WTC11 (cell line): ENCODE measurements at regions of chr19 and their contacts with region 1.

Region 1: DNA sequence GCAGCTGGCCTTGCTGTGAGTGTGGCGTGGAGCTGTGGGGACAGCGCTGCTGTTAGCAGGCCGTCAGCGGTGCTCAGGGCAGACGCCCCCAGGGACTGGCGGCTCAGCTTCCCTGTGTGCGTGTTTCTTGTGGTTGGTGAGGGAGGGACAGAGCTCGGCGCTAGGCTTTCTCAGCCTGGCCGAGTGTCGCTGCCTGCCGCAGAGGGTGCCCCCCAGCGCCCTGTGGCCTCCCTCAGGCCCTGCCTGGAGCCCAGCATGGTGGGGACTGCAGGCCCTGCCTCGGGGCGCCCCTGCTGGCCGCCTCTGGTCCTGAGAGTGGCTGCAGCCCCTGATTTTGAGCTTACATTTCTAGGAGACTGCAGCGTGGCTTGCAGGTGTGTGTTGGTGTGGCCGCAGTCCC is 35.5 kb downstream of the DOT1L start:
- DNase-seq: peak; percentile 62
- ATAC-seq: peak; percentile 89
- H3K4me3 Mint-ChIP-seq: no peak overlapping the region
- H3K27ac Mint-ChIP-seq: peak overlapping the region; percentile 83
- H3K4me1 Mint-ChIP-seq: no peaks in the 10 kb centered on the region
- H3K27me3 Mint-ChIP-seq: no peaks in the 10 kb centered on the region
- CTCF ChIP-seq: peak; percentile 47; the same call in 1 of the 2 replicates

Region 2: DNA sequence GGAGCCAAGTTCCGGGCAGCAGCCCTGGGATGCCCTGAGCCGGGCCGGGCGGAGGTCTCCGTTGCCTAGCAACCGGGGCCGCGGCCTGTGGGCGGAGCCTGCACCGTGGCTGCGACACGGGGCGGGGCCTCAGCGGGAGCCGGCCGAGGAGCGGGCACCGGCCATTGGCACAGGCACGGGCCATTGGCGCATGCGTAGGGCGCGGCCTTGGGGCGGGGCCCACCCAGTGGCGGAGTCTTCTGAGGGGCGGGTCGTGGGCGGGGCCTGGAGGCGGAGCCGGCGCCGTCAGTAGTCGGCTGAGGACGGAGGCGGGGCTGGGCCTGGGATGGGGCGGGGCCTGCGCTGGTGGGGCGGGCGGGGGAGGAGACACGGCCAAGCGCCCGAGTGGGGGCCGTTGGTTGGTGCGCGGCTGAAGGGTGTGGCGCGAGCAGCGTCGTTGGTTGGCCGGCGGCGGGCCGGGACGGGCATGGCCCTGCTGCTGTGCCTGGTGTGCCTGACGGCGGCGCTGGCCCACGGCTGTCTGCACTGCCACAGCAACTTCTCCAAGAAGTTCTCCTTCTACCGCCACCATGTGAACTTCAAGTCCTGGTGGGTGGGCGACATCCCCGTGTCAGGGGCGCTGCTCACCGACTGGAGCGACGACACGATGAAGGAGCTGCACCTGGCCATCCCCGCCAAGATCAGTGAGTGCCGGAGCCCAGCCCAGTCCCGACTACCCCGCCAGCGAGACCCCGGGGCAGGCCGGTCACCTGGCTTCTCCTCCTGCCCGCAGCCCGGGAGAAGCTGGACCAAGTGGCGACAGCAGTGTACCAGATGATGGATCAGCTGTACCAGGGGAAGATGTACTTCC is 102.5 kb before region 1 on chr19 and contains the start of gene IZUMO4:
- CTCF ChIA-PET with region 1: no interaction called
- POLR2A ChIA-PET with region 1: no interaction called
- DNase-seq: peak; percentile 100
- ATAC-seq: peak; percentile 87
- H3K4me3 Mint-ChIP-seq: peak within 1 kb of the TSS; percentile 80
- H3K27ac Mint-ChIP-seq: no peak within 1 kb of the TSS
- H3K4me1 Mint-ChIP-seq: peaks cover 5% of the 10 kb centered on the region; the same call in 1 of the 2 replicates
- H3K27me3 Mint-ChIP-seq: no peaks in the 10 kb centered on the region
- CTCF ChIP-seq: no peak
- total RNA-seq, gene IZUMO4: 0.73 to 1.9 TPM (median 1.8 TPM) in 3 replicates

Region 3: GRCh38 chr19:2158535-2158934 is 40.7 kb before region 1 on chr19:
- CTCF ChIA-PET with region 1: interaction called, 25 read pairs
- POLR2A ChIA-PET with region 1: interaction called, 4 read pairs
- DNase-seq: no peak
- ATAC-seq: no peak
- H3K4me3 Mint-ChIP-seq: no peak overlapping the region
- H3K27ac Mint-ChIP-seq: 0 out of 2 replicates have a peak overlapping the region, but pooled peaks have one; percentile 15
- H3K4me1 Mint-ChIP-seq: no peaks in the 10 kb centered on the region
- H3K27me3 Mint-ChIP-seq: no peaks in the 10 kb centered on the region
- CTCF ChIP-seq: no peak

Region 4: GRCh38 chr19:2176337-2176994 is 22.7 kb before region 1 on chr19:
- CTCF ChIA-PET with region 1: interaction called, 19 read pairs
- POLR2A ChIA-PET with region 1: interaction called, 3 read pairs
- DNase-seq: no peak
- ATAC-seq: no peak
- H3K4me3 Mint-ChIP-seq: no peak overlapping the region
- H3K27ac Mint-ChIP-seq: peak overlapping the region; percentile 83
- H3K4me1 Mint-ChIP-seq: peaks cover 4% of the 10 kb centered on the region
- H3K27me3 Mint-ChIP-seq: no peaks in the 10 kb centered on the region
- CTCF ChIP-seq: no peak

Region 5: GRCh38 chr19:2213799-2214198 is 14.6 kb after region 1 on chr19:
- CTCF ChIA-PET with region 1: interaction called, 13 read pairs
- POLR2A ChIA-PET with region 1: no interaction called
- DNase-seq: no peak
- ATAC-seq: no peak
- H3K4me3 Mint-ChIP-seq: no peak overlapping the region
- H3K27ac Mint-ChIP-seq: peak overlapping the region; percentile 41; the same call in 1 of the 2 replicates
- H3K4me1 Mint-ChIP-seq: no peaks in the 10 kb centered on the region
- H3K27me3 Mint-ChIP-seq: no peaks in the 10 kb centered on the region
- CTCF ChIP-seq: no peak

Region 6: GRCh38 chr19:2302319-2303210 is 103.3 kb after region 1 on chr19:
- CTCF ChIA-PET with region 1: no interaction called
- POLR2A ChIA-PET with region 1: no interaction called
- DNase-seq: peak; percentile 72
- ATAC-seq: peak; percentile 75
- H3K4me3 Mint-ChIP-seq: peak overlapping the region; percentile 25; the same call in 1 of the 2 replicates
- H3K27ac Mint-ChIP-seq: no peak overlapping the region
- H3K4me1 Mint-ChIP-seq: peaks cover 5% of the 10 kb centered on the region
- H3K27me3 Mint-ChIP-seq: peaks cover 10% of the 10 kb centered on the region
- CTCF ChIP-seq: no peak